GM12878 (cell line): ENCODE measurements at regions of chr3 and their contacts with region 1.

Region 1: GRCh38 chr3:36957862-36958686 is 13.2 kb upstream of the TRANK1 start:
- DNase-seq: no peak
- ATAC-seq: peak; percentile 20; the same call in 2 of the 3 replicates
- H3K4me3 ChIP-seq: no peak overlapping the region
- H3K27ac ChIP-seq: no peak overlapping the region
- H3K4me1 ChIP-seq: no peaks in the 10 kb centered on the region
- H3K27me3 ChIP-seq: no peaks in the 10 kb centered on the region
- CTCF ChIP-seq: no peak
- EP300 ChIP-seq: no peak
- POLR2A ChIP-seq: no peak
- RAD21 ChIP-seq: no peak

Region 2: GRCh38 chr3:36282766-36283165 is 675.3 kb before region 1 on chr3:
- CTCF ChIA-PET with region 1: no interaction called
- POLR2A ChIA-PET with region 1: no interaction called
- RAD21 ChIA-PET with region 1: no interaction called
- SMC1A ChIA-PET with region 1: no interaction called
- in situ Hi-C with region 1: no loop called
- intact Hi-C with region 1: no loop called
- DNase-seq: no peak
- ATAC-seq: no peak
- H3K4me3 ChIP-seq: no peak overlapping the region
- H3K27ac ChIP-seq: no peak overlapping the region
- H3K4me1 ChIP-seq: no peaks in the 10 kb centered on the region
- H3K27me3 ChIP-seq: no peaks in the 10 kb centered on the region
- CTCF ChIP-seq: no peak
- EP300 ChIP-seq: no peak
- POLR2A ChIP-seq: no peak
- RAD21 ChIP-seq: no peak

Region 3: DNA sequence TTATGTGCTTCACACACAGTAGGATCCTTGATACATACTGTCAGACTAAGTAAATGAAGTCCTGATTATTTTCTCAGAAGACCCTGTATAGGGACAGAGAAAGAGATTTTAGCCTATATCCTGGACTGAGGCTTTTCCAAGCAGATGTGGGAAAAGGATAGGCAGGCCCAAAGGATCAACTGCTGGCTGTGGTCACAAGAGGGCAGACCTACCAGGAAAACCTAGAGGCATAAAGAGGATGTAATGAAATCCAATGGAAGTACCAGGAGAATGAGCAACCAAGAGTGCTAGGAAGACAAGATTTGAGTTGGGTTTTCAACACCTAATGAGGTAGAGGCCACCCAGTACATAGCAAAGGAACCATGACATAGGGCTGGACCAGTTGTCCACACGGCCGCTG is 216.8 kb before region 1 on chr3:
- CTCF ChIA-PET with region 1: interaction called, 13 read pairs
- POLR2A ChIA-PET with region 1: no interaction called
- RAD21 ChIA-PET with region 1: interaction called, 3 read pairs
- SMC1A ChIA-PET with region 1: no interaction called
- in situ Hi-C with region 1: no loop called
- intact Hi-C with region 1: no loop called
- DNase-seq: no peak
- ATAC-seq: no peak
- H3K4me3 ChIP-seq: no peak overlapping the region
- H3K27ac ChIP-seq: no peak overlapping the region
- H3K4me1 ChIP-seq: no peaks in the 10 kb centered on the region
- H3K27me3 ChIP-seq: peaks cover 0 to 1% of the 10 kb centered on the region in 2 experiments; a peak in 1 of 4 replicates
- CTCF ChIP-seq: no peak
- EP300 ChIP-seq: no peak
- POLR2A ChIP-seq: no peak
- RAD21 ChIP-seq: no peak

Region 4: GRCh38 chr3:36852071-36852470 is 106.0 kb before region 1 on chr3:
- CTCF ChIA-PET with region 1: interaction called, 14 read pairs
- POLR2A ChIA-PET with region 1: no interaction called
- RAD21 ChIA-PET with region 1: interaction called, 4 read pairs
- SMC1A ChIA-PET with region 1: no interaction called
- in situ Hi-C with region 1: no loop called
- intact Hi-C with region 1: no loop called
- DNase-seq: no peak
- ATAC-seq: no peak
- H3K4me3 ChIP-seq: no peak overlapping the region
- H3K27ac ChIP-seq: no peak overlapping the region
- H3K4me1 ChIP-seq: no peaks in the 10 kb centered on the region
- H3K27me3 ChIP-seq: no peaks in the 10 kb centered on the region
- CTCF ChIP-seq: no peak
- EP300 ChIP-seq: no peak
- POLR2A ChIP-seq: no peak
- RAD21 ChIP-seq: no peak

Region 5: GRCh38 chr3:36904641-36905040 is 53.4 kb before region 1 on chr3:
- CTCF ChIA-PET with region 1: interaction called, 116 read pairs
- POLR2A ChIA-PET with region 1: interaction called, 3 read pairs
- RAD21 ChIA-PET with region 1: interaction called, 83 read pairs
- SMC1A ChIA-PET with region 1: interaction called, 70 read pairs
- in situ Hi-C with region 1: no loop called
- intact Hi-C with region 1: loop called (anchors 1 kb)
- DNase-seq: no peak
- ATAC-seq: peak; percentile 16; the same call in 2 of the 3 replicates
- H3K4me3 ChIP-seq: no peak overlapping the region
- H3K27ac ChIP-seq: no peak overlapping the region
- H3K4me1 ChIP-seq: peaks cover 7% of the 10 kb centered on the region
- H3K27me3 ChIP-seq: peaks cover 0 to 1% of the 10 kb centered on the region in 2 experiments; a peak in 1 of 4 replicates
- CTCF ChIP-seq: peak; percentile 38 to 62 (median 51); a peak in 4 of 6 replicates
- EP300 ChIP-seq: no peak
- POLR2A ChIP-seq: no peak
- RAD21 ChIP-seq: peak; percentile 55

Region 6: GRCh38 chr3:36944012-36944640 is 13.9 kb before region 1 on chr3:
- CTCF ChIA-PET with region 1: interaction called, 21 read pairs
- POLR2A ChIA-PET with region 1: interaction called, 5 read pairs
- RAD21 ChIA-PET with region 1: interaction called, 4 read pairs
- SMC1A ChIA-PET with region 1: interaction called, 7 read pairs
- in situ Hi-C with region 1: no loop called
- intact Hi-C with region 1: no loop called
- DNase-seq: no peak
- ATAC-seq: peak; percentile 50
- H3K4me3 ChIP-seq: peak overlapping the region; percentile 59; the same call in 1 of the 2 replicates
- H3K27ac ChIP-seq: no peak overlapping the region
- H3K4me1 ChIP-seq: peaks cover 6% of the 10 kb centered on the region; the same call in 1 of the 2 replicates
- H3K27me3 ChIP-seq: peaks cover 7 to 12% of the 10 kb centered on the region in 2 experiments; a peak in 3 of 4 replicates
- CTCF ChIP-seq: no peak
- EP300 ChIP-seq: no peak
- POLR2A ChIP-seq: no peak
- RAD21 ChIP-seq: no peak

Region 7: DNA sequence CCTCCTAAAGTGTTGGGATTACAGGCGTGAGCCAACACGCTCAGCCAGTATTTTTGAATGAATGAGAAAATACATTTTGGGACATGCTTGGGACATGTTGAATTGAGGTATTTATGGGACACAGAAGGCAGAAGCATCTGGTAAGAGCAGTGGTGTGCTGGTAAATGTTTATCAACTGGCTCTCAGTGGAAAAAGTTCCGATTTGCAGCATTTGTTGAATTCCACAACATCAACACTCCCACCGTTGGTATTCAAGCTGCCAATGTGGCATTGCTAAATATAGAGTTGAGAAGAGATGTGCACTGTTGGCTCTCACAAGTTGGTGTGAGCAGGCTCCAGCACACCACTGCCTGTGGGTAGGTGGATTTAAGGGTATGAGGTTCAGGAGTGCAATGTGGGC is 252.2 kb after region 1 on chr3:
- CTCF ChIA-PET with region 1: interaction called, 11 read pairs
- POLR2A ChIA-PET with region 1: interaction called, 4 read pairs
- RAD21 ChIA-PET with region 1: interaction called, 6 read pairs
- SMC1A ChIA-PET with region 1: interaction called, 11 read pairs
- in situ Hi-C with region 1: no loop called
- intact Hi-C with region 1: no loop called
- DNase-seq: no peak
- ATAC-seq: no peak
- H3K4me3 ChIP-seq: no peak overlapping the region
- H3K27ac ChIP-seq: no peak overlapping the region
- H3K4me1 ChIP-seq: no peaks in the 10 kb centered on the region
- H3K27me3 ChIP-seq: no peaks in the 10 kb centered on the region
- CTCF ChIP-seq: no peak
- EP300 ChIP-seq: no peak
- POLR2A ChIP-seq: no peak
- RAD21 ChIP-seq: no peak